ENCODE measurements at regions of chr17 and their contacts with region 1.

Region 1: GRCh38 chr17:49646391-49647255 is 31.3 kb downstream of the SPOP start:
- DNase-seq: no peak
- H3K4me3 ChIP-seq: no peak overlapping the region
- H3K27ac ChIP-seq: peak overlapping the region; percentile 68 to 73
- H3K4me1 ChIP-seq: no peaks in the 10 kb centered on the region
- H3K27me3 ChIP-seq: no peaks in the 10 kb centered on the region
- CTCF ChIP-seq: no peak
- POLR2A ChIP-seq: no peak

Region 2: DNA sequence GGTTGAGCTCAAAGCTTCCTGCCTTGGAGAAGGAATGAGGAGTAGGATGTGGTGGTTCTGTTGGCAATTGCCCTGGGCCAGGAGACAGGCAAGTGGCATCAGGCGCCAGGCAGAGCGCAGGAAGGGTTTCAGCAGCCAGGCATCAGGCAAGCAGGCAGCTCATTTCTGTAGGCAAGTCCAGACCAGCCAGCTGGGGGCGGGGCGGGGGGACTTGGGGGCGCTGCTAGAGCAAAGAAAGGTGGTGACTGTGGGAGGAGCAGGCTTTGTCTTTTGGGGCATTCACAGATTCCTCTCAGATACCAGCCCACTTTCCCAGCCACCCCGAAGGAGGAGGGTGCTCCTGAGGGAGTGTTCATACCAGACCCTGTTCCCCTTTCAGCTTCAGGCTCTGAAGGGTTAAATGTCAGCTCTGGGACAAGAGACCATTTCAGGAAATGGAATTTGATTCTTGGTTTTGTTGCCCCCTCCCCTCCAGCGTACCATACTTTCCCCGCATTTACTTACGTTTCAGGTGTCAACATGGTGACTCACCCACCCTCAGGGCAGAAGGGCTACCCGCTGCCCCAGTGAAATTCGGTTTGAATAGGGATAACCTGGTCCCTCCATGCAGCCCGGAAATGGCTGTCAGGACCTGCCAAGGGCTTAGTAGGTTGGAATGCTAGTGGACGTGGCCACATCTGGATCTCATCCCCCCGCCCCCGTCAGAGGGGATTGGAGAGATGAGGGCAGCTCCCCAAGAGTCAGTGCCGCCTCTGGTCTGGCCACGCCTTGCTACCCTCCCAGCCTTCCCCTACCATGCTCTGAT is 138.4 kb before region 1 on chr17:
- intact Hi-C with region 1: no loop called
- DNase-seq: peak; percentile 90
- H3K4me3 ChIP-seq: no peak overlapping the region
- H3K27ac ChIP-seq: peak overlapping the region; percentile 71
- H3K4me1 ChIP-seq: no peaks in the 10 kb centered on the region
- H3K27me3 ChIP-seq: no peaks in the 10 kb centered on the region
- CTCF ChIP-seq: no peak
- POLR2A ChIP-seq: peak; percentile 7

Region 3: DNA sequence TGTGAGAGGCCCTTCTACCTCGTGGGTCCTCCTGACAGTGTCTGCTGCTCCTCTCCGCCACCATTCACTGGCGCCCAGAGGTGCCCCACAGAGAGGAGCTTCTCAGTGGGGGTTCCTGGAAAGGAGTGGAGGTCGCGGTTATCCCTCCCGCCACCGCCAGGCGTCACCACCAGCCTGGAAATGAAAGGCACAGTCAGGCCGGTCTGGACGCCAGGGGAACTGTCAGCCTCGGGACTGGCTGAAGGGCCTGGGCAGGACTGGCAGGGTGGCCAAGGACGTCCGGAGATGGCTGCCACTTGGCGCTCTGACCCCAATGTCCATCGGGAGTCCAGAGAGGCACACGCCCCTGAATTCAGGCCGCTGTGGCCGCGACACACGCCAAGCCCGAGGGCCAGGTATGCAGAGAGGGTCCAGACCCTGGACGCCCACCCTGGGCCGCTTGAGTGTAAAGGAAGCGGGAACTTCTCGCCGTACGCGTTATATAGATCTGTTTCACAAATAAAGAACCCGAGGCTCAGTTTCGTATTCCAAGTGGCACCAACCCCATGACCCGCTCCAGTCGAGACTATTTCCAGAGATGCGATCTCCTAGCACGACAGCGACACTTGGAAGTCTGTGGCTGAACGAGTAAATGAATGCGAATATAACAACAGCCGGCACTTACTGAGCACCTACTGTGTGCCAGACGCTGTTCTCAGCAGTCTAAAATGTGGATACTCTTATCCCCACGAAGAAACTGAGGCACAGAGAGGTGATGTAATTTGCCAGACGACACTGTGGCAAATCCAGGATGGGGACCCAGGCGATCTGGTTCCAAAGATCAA is 78.5 kb before region 1 on chr17:
- intact Hi-C with region 1: no loop called
- DNase-seq: peak; percentile 81
- H3K4me3 ChIP-seq: peak overlapping the region; percentile 12 to 27
- H3K27ac ChIP-seq: peak overlapping the region; percentile 69 to 70
- H3K4me1 ChIP-seq: peaks cover 2% of the 10 kb centered on the region
- H3K27me3 ChIP-seq: no peaks in the 10 kb centered on the region
- CTCF ChIP-seq: peak; percentile 94 to 98 (median 97)
- POLR2A ChIP-seq: no peak

Region 4: GRCh38 chr17:49694847-49695683 is 48.4 kb after region 1 on chr17:
- intact Hi-C with region 1: loop called (anchors 5 kb)
- DNase-seq: peak; percentile 41
- H3K4me3 ChIP-seq: no peak overlapping the region
- H3K27ac ChIP-seq: peak overlapping the region in 1 of 2 donors; percentile 41
- H3K4me1 ChIP-seq: no peaks in the 10 kb centered on the region
- H3K27me3 ChIP-seq: no peaks in the 10 kb centered on the region
- CTCF ChIP-seq: peak; percentile 90 to 96 (median 94)
- POLR2A ChIP-seq: no peak

Measured in prostate gland (tissue), 2 donors.